ENCODE measurements at regions of chr3 and their contacts with region 1.

Region 1: GRCh38 chr3:150408221-150409102 is at the start of gene TSC22D2:
- DNase-seq: peak; percentile 98
- ATAC-seq: peak; percentile 73
- H3K4me3 ChIP-seq: peak within 1 kb of the TSS; percentile 66 to 88 (median 77)
- H3K4me3 Mint-ChIP-seq: peak within 1 kb of the TSS; percentile 87
- H3K27ac ChIP-seq: peak within 1 kb of the TSS; percentile 91 to 99
- H3K27ac Mint-ChIP-seq: peak within 1 kb of the TSS; percentile 94
- H3K4me1 ChIP-seq: peaks cover 21 to 25% of the 10 kb centered on the region in 2 donors
- H3K4me1 Mint-ChIP-seq: peaks cover 33% of the 10 kb centered on the region
- H3K27me3 ChIP-seq: no peaks in the 10 kb centered on the region
- H3K27me3 Mint-ChIP-seq: no peaks in the 10 kb centered on the region
- CTCF ChIP-seq: no peak
- total RNA-seq, gene TSC22D2: 45.9 and 48.5 TPM in 2 replicates

Region 2: GRCh38 chr3:149812606-149813366 is 595.7 kb before region 1 on chr3 and contains the start of gene RNF13:
- CTCF ChIA-PET with region 1: no interaction called
- POLR2A ChIA-PET with region 1: no interaction called
- intact Hi-C with region 1: loop called (anchors 2 kb)
- DNase-seq: peak; percentile 93
- ATAC-seq: peak; percentile 89
- H3K4me3 ChIP-seq: peak within 1 kb of the TSS; percentile 68 to 99 (median 94)
- H3K4me3 Mint-ChIP-seq: peak within 1 kb of the TSS; percentile 99
- H3K27ac ChIP-seq: peak within 1 kb of the TSS; percentile 94
- H3K27ac Mint-ChIP-seq: peak within 1 kb of the TSS; percentile 100
- H3K4me1 ChIP-seq: peaks cover 39 to 45% of the 10 kb centered on the region in 2 donors
- H3K4me1 Mint-ChIP-seq: peaks cover 51% of the 10 kb centered on the region
- H3K27me3 ChIP-seq: no peaks in the 10 kb centered on the region
- H3K27me3 Mint-ChIP-seq: peaks cover 3% of the 10 kb centered on the region
- CTCF ChIP-seq: no peak
- total RNA-seq, gene RNF13: 86.5 and 92.8 TPM in 2 replicates

Region 3: GRCh38 chr3:150371741-150372254 is 36.7 kb before region 1 on chr3:
- CTCF ChIA-PET with region 1: interaction called, 3 read pairs
- POLR2A ChIA-PET with region 1: no interaction called
- intact Hi-C with region 1: loop called (anchors 5 kb)
- DNase-seq: no peak
- ATAC-seq: no peak
- H3K4me3 ChIP-seq: no peak overlapping the region
- H3K4me3 Mint-ChIP-seq: no peak overlapping the region
- H3K27ac ChIP-seq: no peak overlapping the region
- H3K27ac Mint-ChIP-seq: no peak overlapping the region
- H3K4me1 ChIP-seq: peaks cover 3 to 4% of the 10 kb centered on the region in 2 donors
- H3K4me1 Mint-ChIP-seq: peaks cover 16% of the 10 kb centered on the region
- H3K27me3 ChIP-seq: no peaks in the 10 kb centered on the region
- H3K27me3 Mint-ChIP-seq: no peaks in the 10 kb centered on the region
- CTCF ChIP-seq: no peak

Region 4: DNA sequence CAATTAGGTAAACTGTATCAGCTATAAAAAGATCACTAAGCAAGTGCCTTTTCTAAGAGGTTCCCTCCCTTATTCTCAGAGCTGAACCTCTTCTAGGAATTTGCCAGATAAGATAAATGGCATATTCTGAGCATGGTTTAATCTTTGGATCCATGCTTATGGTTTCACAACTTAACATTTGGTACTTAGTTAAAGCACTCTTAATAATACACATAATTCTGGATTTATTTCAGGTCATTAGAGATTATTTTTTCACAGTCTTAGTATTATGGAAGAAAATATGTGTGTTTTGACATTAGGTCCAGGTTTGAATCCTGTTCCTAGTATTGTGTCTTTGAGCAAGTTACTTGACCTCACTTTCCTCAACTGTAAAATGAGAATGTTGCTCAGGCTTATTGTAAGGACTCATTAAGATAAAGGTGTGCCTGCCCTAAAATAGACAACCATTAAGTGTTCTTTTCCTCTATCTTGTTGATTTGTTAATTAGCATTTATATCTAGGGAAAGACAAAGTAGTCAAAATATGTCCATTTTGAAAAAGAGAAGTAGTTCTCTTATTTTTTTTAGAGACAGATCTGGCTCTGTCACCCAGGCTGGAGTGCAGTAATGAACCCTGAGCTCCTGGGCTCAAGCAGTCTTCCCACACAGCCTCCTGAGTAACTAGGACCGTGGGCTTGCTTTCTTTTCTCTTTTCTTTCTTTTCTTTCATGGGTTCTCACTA is 43.0 kb after region 1 on chr3:
- CTCF ChIA-PET with region 1: no interaction called
- POLR2A ChIA-PET with region 1: interaction called, 4 read pairs
- intact Hi-C with region 1: loop called (anchors 5 kb)
- DNase-seq: no peak
- ATAC-seq: no peak
- H3K4me3 ChIP-seq: no peak overlapping the region
- H3K4me3 Mint-ChIP-seq: no peak overlapping the region
- H3K27ac ChIP-seq: no peak overlapping the region
- H3K27ac Mint-ChIP-seq: no peak overlapping the region
- H3K4me1 ChIP-seq: no peaks in the 10 kb centered on the region
- H3K4me1 Mint-ChIP-seq: peaks cover 20% of the 10 kb centered on the region
- H3K27me3 ChIP-seq: no peaks in the 10 kb centered on the region
- H3K27me3 Mint-ChIP-seq: no peaks in the 10 kb centered on the region
- CTCF ChIP-seq: no peak

Region 5: DNA sequence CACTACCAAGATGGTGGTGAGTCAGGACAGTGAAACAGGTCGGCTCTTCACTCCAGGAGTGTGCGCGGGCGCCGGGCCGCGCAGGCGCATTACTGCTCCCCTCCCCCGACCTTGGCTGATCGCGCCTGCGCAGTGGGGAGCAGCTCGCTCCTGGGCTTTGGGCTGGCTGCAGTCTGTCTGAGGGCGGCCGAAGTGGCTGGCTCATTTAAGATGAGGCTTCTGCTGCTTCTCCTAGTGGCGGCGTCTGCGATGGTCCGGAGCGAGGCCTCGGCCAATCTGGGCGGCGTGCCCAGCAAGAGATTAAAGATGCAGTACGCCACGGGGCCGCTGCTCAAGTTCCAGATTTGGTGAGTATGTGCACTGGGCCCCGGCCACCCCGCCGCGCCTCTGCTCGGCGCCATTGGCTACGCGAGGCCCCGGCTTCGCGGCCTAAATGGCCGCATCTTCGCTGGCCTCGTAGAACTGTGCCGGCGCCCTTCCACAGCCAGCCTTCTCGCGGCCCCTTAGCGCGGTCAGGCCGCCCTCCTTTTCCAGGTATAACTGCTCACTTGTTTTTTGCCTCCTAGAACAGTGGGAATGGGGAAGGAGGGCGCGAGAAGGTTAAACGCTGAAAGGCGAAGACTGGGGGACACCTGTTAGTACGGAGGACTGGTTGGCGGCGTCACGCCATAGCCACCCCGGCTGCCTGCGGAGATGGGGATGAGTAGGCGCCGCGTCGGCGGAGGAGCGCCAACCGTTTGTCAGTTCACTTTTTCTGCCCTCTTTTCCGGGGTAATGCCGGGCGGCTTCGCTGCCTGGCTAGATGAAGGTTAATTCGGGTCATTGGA is 194.9 kb after region 1 on chr3 and contains the start of gene SELENOT:
- CTCF ChIA-PET with region 1: no interaction called
- POLR2A ChIA-PET with region 1: interaction called, 8 read pairs
- intact Hi-C with region 1: loop called (anchors 2 kb)
- DNase-seq: peak; percentile 97
- ATAC-seq: peak; percentile 70
- H3K4me3 ChIP-seq: peak within 1 kb of the TSS; percentile 66 to 90 (median 87)
- H3K4me3 Mint-ChIP-seq: peak within 1 kb of the TSS; percentile 95
- H3K27ac ChIP-seq: peak within 1 kb of the TSS; percentile 99 to 100
- H3K27ac Mint-ChIP-seq: peak within 1 kb of the TSS; percentile 100
- H3K4me1 ChIP-seq: peaks cover 66 to 69% of the 10 kb centered on the region in 2 donors
- H3K4me1 Mint-ChIP-seq: peaks cover 84% of the 10 kb centered on the region
- H3K27me3 ChIP-seq: no peaks in the 10 kb centered on the region
- H3K27me3 Mint-ChIP-seq: no peaks in the 10 kb centered on the region
- CTCF ChIP-seq: peak; percentile 38
- total RNA-seq, gene SELENOT: 73.1 and 76.7 TPM in 2 replicates

Region 6: DNA sequence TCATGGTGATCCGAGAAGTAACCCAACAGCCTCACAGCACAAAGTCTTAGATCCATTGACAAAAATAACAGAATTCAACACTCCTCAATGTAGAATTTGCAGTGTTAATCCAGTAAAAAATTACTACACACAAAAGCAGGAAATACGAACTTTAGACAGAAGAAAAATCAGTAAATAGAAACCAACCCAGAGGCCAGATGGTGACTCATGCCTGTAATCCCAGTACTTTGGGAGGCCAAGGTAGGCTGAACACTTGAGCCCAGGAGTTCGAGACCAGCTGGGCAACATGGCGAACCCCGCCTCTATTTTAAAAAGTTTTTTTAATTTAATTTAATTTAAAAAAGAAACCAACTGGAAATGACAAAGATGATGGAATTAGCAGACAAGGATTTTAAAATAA is 230.8 kb after region 1 on chr3:
- CTCF ChIA-PET with region 1: no interaction called
- POLR2A ChIA-PET with region 1: no interaction called
- intact Hi-C with region 1: no loop called
- DNase-seq: no peak
- ATAC-seq: no peak
- H3K4me3 ChIP-seq: no peak overlapping the region
- H3K4me3 Mint-ChIP-seq: no peak overlapping the region
- H3K27ac ChIP-seq: no peak overlapping the region
- H3K27ac Mint-ChIP-seq: no peak overlapping the region
- H3K4me1 ChIP-seq: peaks cover 3 to 6% of the 10 kb centered on the region in 2 donors
- H3K4me1 Mint-ChIP-seq: peaks cover 16% of the 10 kb centered on the region
- H3K27me3 ChIP-seq: no peaks in the 10 kb centered on the region
- H3K27me3 Mint-ChIP-seq: no peaks in the 10 kb centered on the region
- CTCF ChIP-seq: no peak

Region 7: GRCh38 chr3:152268555-152269425 is 1860.3 kb after region 1 on chr3 and contains the start of gene MBNL1:
- CTCF ChIA-PET with region 1: no interaction called
- POLR2A ChIA-PET with region 1: no interaction called
- intact Hi-C with region 1: loop called (anchors 2 kb)
- DNase-seq: peak; percentile 93
- ATAC-seq: peak; percentile 70
- H3K4me3 ChIP-seq: peak within 1 kb of the TSS; percentile 91 to 100 (median 93)
- H3K4me3 Mint-ChIP-seq: peak within 1 kb of the TSS; percentile 87
- H3K27ac ChIP-seq: peak within 1 kb of the TSS; percentile 86 to 93
- H3K27ac Mint-ChIP-seq: peak within 1 kb of the TSS; percentile 96
- H3K4me1 ChIP-seq: peaks cover 29 to 49% of the 10 kb centered on the region in 2 donors
- H3K4me1 Mint-ChIP-seq: peaks cover 63% of the 10 kb centered on the region
- H3K27me3 ChIP-seq: no peaks in the 10 kb centered on the region
- H3K27me3 Mint-ChIP-seq: no peaks in the 10 kb centered on the region
- CTCF ChIP-seq: no peak
- total RNA-seq, gene MBNL1: 505 and 514 TPM in 2 replicates